HEK293 (cell line): ENCODE measurements at regions of chrX and their contacts with region 1.

Region 1: GRCh38 chrX:119791438-119792231 is at the start of gene RPL39:
- H3K4me3 ChIP-seq: peak within 1 kb of the TSS; percentile 77
- H3K27ac ChIP-seq: peak within 1 kb of the TSS; percentile 96
- H3K4me1 ChIP-seq: peaks cover 2% of the 10 kb centered on the region; the same call in 1 of the 2 replicates
- CTCF ChIP-seq: no peak

Region 2: GRCh38 chrX:119359618-119360382 is 431.8 kb before region 1 on chrX:
- CTCF ChIA-PET with region 1: no interaction called
- POLR2A ChIA-PET with region 1: no interaction called
- H3K4me3 ChIP-seq: no peak overlapping the region
- H3K27ac ChIP-seq: no peak overlapping the region
- H3K4me1 ChIP-seq: no peaks in the 10 kb centered on the region
- CTCF ChIP-seq: no peak

Region 3: GRCh38 chrX:119391279-119391678 is 400.4 kb before region 1 on chrX:
- CTCF ChIA-PET with region 1: no interaction called
- POLR2A ChIA-PET with region 1: no interaction called
- H3K4me3 ChIP-seq: no peak overlapping the region
- H3K27ac ChIP-seq: no peak overlapping the region
- H3K4me1 ChIP-seq: no peaks in the 10 kb centered on the region
- CTCF ChIP-seq: no peak

Region 4: GRCh38 chrX:119574394-119575266 is 217.0 kb before region 1 on chrX and contains the start of gene UBE2A:
- CTCF ChIA-PET with region 1: no interaction called
- POLR2A ChIA-PET with region 1: interaction called, 12 read pairs
- H3K4me3 ChIP-seq: peak within 1 kb of the TSS; percentile 76
- H3K27ac ChIP-seq: peak within 1 kb of the TSS; percentile 64; the same call in 1 of the 2 replicates
- H3K4me1 ChIP-seq: peaks cover 5% of the 10 kb centered on the region; the same call in 1 of the 2 replicates
- CTCF ChIP-seq: peak; percentile 43

Region 5: DNA sequence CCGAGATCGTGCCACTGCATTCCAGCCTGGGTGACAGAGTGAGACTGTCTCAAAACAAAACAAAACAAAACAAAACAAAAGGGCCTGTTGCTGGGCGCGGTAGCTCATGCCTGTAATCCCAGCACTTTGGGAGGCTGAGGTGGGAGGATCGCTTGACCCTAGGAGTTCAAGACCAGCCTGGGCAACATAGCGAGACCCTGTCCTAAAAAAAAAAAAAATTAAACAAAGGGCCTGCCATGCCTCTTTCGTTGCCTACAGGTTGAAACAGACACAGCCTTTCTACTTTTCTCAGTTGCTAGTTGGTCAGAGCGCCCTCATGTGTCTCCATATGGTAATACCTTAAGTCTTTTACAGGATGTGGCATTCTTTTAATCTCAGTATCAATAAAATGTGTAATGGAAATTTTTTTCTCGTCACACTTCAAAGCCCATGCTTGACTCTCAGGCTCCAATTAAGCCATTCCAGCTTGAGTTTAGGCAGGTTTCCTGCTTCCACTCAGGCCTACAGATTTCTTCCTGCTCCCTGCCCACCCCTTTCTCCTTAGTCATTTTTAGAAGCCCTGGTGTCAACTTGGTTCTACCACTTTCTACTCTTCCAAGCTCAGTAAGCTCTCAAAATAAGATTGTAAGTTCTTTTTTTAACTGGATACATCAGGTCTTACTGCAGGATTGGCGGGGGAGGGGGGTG is 37.9 kb before region 1 on chrX:
- CTCF ChIA-PET with region 1: interaction called, 5 read pairs
- POLR2A ChIA-PET with region 1: interaction called, 32 read pairs
- H3K4me3 ChIP-seq: no peak overlapping the region
- H3K27ac ChIP-seq: no peak overlapping the region
- H3K4me1 ChIP-seq: 0 out of 2 replicates have a peak, but pooled peaks cover 2% of the 10 kb centered on the region
- CTCF ChIP-seq: peak; percentile 48

Region 6: GRCh38 chrX:119852382-119853353 is 61.0 kb after region 1 on chrX and contains the start of gene UPF3B:
- CTCF ChIA-PET with region 1: no interaction called
- POLR2A ChIA-PET with region 1: interaction called, 54 read pairs
- H3K4me3 ChIP-seq: peak within 1 kb of the TSS; percentile 85
- H3K27ac ChIP-seq: peak within 1 kb of the TSS; percentile 79
- H3K4me1 ChIP-seq: no peaks in the 10 kb centered on the region
- CTCF ChIP-seq: no peak

Region 7: DNA sequence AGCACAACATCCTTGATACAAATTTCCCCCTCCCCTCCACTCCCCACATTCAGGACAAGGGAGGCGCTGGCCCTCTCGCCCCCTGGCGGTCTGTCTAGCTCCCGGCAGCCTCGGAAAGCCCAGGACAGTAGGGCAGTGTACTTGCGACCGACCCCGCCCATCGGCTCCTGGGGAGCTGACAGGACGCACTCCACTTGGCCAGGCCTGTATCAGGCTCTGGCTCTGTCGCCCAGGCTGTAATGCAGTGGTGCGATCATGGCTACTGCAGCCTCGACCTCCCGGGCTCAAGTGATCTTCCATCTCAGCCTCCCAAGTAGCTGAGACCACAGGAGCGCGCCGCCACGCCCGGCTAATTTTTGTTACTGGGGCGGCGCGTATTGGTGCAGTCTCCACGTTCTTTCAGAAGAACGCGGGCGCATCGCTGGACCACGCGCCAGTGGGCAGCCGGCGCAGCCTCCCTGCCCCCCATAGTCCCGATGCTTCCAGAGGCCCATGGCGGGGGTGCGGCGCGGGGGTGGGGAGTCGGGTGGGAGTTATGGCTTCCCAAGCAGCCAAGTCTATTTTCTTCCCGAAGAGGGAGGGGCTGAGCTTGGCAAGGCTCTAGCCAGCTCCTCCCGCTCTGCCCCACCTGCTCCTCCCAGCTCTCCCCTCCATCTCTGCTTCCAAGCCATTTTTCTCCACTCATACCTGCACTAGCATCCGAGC is 96.2 kb after region 1 on chrX:
- CTCF ChIA-PET with region 1: interaction called, 6 read pairs
- POLR2A ChIA-PET with region 1: interaction called, 15 read pairs
- H3K4me3 ChIP-seq: peak overlapping the region; percentile 30
- H3K27ac ChIP-seq: no peak overlapping the region; the same call in 1 of the 2 replicates
- H3K4me1 ChIP-seq: no peaks in the 10 kb centered on the region
- CTCF ChIP-seq: peak; percentile 82